Posterior vena cava (tissue), 2 donors: ENCODE measurements at regions of chrX and their contacts with region 1.

Region 1: GRCh38 chrX:31580726-31581125 is 508.9 kb upstream of the FTHL17 start:
- DNase-seq: no peak

Region 2: GRCh38 chrX:30767454-30767853 is 813.3 kb before region 1 on chrX:
- intact Hi-C with region 1: no loop called
- DNase-seq: no peak

Region 3: DNA sequence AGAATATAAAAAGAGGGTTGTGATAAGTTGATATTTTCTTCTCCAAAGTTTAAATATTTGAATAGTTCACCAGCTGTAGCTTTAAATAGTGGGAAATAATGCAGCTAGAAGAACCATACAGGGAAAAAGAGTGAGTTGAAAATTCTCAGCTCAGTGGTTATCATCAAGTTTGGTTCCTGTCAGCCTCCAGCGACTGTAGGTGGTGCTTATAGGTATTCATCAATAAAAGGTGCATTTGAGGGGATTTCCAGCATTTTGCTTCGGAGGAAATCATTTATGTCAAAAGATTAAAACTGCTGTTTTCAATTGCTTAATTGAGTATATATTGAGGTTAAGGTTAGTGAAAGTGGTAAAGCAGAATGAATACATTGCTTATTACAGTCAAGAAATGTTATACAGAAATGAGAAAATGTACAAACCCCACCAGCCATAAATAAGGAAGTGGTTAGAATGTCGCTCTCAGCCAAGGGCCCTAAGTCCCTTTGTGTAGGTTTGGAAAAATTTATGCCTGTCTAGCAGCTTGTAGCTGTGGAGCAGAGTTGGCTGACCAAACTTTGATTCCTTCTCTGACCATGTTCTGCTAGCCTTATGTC is 24.0 kb after region 1 on chrX:
- intact Hi-C with region 1: no loop called
- DNase-seq: no peak

Region 4: DNA sequence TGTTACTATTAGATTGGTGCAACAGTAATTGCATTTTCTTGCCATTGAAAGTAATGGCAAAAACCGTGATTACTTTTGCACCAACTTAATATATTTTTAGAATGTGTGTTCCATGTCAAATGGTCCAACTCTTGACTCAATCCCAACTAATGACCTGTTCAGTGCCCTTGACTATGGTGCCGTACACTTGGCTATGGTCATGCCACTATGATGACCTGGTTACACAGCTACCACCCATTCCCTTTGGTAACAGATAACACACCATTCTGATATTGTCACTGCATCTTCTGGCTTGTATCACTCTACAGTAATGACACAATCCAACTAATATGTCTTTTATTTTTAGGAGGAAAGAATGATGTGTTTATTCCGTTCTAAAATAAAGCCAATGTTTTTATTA is 1161.2 kb after region 1 on chrX:
- intact Hi-C with region 1: loop called in 1 of 2 experiments (anchors 10 kb)
- DNase-seq: no peak